Heart right ventricle (tissue), 16 donors: ENCODE measurements at regions of chr5 and their contacts with region 1.

Region 1: GRCh38 chr5:14008819-14009311 is 64.4 kb upstream of the DNAH5 start:
- DNase-seq: no peak
- ATAC-seq: no peak
- H3K4me3 ChIP-seq: no peak overlapping the region
- H3K27ac ChIP-seq: no peak overlapping the region
- H3K4me1 ChIP-seq: peaks cover 0 to 19% (median 10%) of the 10 kb centered on the region in 9 donors
- H3K27me3 ChIP-seq: peaks cover 0 to 30% (median 0%) of the 10 kb centered on the region in 7 donors
- CTCF ChIP-seq: no peak

Region 2: GRCh38 chr5:14097998-14098471 is 89.2 kb after region 1 on chr5:
- intact Hi-C with region 1: loop called in 2 of 10 experiments (anchors 10 kb)
- DNase-seq: no peak
- ATAC-seq: no peak
- H3K4me3 ChIP-seq: no peak overlapping the region
- H3K27ac ChIP-seq: no peak overlapping the region
- H3K4me1 ChIP-seq: no peaks in the 10 kb centered on the region
- H3K27me3 ChIP-seq: no peaks in the 10 kb centered on the region
- CTCF ChIP-seq: no peak

Region 3: DNA sequence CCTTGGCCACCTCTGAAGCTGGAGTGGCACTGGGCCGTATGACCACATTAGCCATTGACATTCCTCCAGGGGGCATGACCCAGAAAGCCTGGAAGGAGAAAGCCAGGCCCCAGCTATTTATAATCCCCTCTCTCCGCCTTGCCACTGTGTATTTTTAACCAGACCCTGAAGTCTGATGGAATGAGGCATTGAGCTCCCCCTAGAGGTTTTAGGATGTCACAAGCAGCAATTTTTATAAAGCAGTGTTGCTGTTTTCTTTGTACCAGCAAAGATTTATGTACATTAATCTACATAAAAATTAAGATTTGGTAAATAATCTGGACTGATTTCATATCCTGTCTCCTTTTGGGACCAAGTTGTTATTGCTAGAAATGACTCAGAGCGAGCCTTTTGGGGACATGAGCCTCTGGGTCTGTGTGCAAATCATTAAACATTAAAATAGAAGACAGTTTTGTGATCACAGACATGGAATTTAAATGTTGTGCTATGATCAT is 261.4 kb after region 1 on chr5:
- intact Hi-C with region 1: loop called in 1 of 10 experiments (anchors 5 kb)
- DNase-seq: peak in 1 of 2 donors; percentile 79
- ATAC-seq: peak; percentile 90 to 96 (median 95)
- H3K4me3 ChIP-seq: no peak overlapping the region
- H3K27ac ChIP-seq: peak overlapping the region in 9 of 10 donors; percentile 38 to 84 (median 68)
- H3K4me1 ChIP-seq: peaks cover 18 to 71% (median 51%) of the 10 kb centered on the region in 9 donors
- H3K27me3 ChIP-seq: no peaks in the 10 kb centered on the region
- CTCF ChIP-seq: peak; percentile 64 to 92 (median 83)

Region 4: DNA sequence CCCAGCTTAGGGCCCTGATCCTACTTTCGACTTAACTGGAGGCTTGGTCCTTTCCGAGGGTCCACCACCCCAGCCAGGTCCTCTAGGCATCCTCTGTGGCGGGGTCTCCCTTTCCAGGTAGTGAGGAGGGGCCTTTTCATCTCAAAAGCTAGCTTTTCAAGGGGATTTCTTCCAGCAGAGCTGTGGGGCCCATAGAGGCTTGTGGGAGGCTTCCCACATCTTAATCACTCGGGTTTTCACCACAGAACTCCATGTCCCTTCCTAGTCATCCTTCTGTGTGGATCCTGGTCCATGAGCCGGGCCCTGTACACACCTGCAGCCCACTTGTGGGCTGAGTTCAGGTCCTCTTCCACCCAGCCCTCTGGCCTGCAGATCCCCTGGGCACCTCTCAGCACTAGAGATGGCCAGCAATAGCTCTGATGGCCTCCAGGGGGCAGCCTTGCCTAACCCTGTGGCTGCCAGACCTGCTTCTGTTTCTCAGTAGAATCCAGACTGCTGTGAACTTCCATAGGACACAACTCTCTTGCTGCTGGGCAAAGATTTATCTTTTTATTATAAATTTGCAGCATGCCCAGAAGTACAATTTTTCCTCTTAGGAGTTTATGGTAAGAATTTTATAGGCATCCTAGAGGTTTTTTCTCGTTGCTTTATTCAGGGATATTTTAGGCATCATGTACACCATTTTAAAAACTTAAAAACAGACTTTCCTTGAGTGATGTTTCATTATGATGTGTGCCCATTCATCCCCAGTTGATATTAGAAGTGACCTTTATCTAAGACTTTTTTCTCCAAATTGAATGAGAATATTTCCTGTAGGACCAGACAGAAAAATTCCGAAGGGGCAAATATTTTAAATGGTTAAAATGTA is 343.2 kb after region 1 on chr5:
- intact Hi-C with region 1: loop called in 1 of 10 experiments (anchors 10 kb)
- DNase-seq: peak; percentile 59 to 64
- ATAC-seq: peak; percentile 80 to 93 (median 87)
- H3K4me3 ChIP-seq: no peak overlapping the region
- H3K27ac ChIP-seq: no peak overlapping the region
- H3K4me1 ChIP-seq: peaks cover 7 to 45% (median 10%) of the 10 kb centered on the region in 9 donors
- H3K27me3 ChIP-seq: no peaks in the 10 kb centered on the region
- CTCF ChIP-seq: peak; percentile 88 to 98 (median 96)